Activated T-helper 2 cell treated with anti-CD3 and anti-CD28 coated beads, Interferon-gamma antibody, Interleukin-2, Interleukin-4, amounts not matched to agents 10 μg/mL and 5 μg/mL and 100 μg/mL, durations not matched to agents 14 hours and 24 hours and 36 hours (primary cell): ENCODE measurements at regions of chr12 and their contacts with region 1.

Region 1: GRCh38 chr12:99043319-99043914 is 398.3 kb downstream of the APAF1 start:
- DNase-seq: no peak
- H3K4me3 Mint-ChIP-seq: no peak overlapping the region
- H3K27ac Mint-ChIP-seq: no peak overlapping the region
- H3K4me1 Mint-ChIP-seq: no peaks in the 10 kb centered on the region
- H3K27me3 Mint-ChIP-seq: no peaks in the 10 kb centered on the region

Region 2: DNA sequence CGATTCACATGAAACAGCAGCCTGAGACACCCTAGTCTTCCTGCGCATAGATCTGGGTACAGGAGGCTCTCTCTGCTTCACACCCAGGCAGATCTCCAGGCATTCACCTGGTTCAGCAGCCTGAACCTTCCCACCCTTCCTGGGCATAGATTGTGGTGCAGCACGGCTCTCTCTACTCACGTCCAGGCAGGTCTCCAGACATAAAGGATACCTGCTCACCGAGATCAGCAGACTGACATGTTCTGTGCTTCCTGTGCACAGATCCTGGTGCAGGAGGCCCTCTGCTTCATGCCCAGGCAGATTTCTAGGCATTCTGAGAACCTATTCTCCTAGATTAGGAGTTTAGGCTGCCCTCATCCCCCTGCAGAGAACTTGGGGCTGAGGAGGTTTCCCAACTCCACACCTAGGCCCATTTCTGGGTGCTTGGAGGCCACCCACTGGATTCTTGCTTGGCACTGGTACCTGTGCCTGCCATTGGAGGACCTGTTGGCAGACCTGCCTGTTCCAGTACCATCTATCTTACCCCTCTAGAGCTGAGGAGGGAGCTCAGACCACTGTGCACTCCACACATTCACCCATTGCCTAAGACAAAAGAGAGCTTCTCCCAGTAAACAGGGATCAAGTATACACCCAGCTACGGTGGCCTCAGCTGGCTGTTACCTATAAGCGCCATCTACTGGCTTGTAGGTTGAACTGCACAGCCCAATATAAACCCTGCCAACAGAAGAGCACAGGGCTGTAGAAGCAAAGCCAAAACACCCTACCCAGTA is 576.2 kb after region 1 on chr12:
- intact Hi-C with region 1: loop called (anchors 1 kb)
- DNase-seq: no peak
- H3K4me3 Mint-ChIP-seq: no peak overlapping the region
- H3K27ac Mint-ChIP-seq: no peak overlapping the region
- H3K4me1 Mint-ChIP-seq: no peaks in the 10 kb centered on the region
- H3K27me3 Mint-ChIP-seq: no peaks in the 10 kb centered on the region

Region 3: DNA sequence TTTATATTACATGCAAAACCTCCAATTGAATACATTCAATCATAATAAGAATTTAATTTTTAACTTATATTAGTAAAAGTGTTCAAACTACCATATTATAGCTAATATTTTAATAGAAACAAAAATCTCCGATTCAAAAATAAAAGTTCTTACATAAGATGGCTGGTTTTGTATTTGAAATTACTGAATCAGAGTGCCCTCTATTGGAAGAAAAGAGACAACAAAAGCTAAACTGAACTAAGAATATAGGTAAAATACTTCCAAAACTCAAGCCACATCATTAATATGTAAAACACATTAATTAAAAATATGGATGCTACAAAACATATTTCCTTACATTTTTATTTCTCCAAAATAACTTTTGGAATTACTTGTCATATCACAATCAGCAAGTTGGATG is 724.4 kb after region 1 on chr12:
- intact Hi-C with region 1: loop called (anchors 2 kb)
- DNase-seq: no peak
- H3K4me3 Mint-ChIP-seq: no peak overlapping the region
- H3K27ac Mint-ChIP-seq: no peak overlapping the region
- H3K4me1 Mint-ChIP-seq: no peaks in the 10 kb centered on the region
- H3K27me3 Mint-ChIP-seq: no peaks in the 10 kb centered on the region

Region 4: DNA sequence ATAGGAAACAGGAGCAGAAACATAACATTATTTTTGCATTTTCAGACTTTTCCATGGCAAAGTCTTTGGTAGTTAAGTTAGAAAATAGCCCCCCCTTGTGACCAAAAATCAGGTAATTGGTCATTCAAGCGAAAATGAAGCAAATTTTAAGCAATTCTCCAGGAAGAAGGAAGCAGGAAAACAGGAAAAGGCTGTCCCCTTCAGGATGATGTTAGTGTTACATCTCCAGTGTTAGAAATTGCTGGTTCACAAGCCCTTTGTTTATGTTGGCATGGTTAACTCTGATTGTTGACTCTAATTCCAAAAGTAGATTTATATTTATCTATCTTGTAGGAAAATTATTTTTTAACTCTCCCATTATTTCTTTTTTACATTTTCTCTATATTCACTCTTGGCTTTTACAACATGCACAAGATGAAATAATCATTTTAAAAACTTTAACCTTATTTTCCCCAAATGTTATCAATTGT is 1511.2 kb after region 1 on chr12:
- intact Hi-C with region 1: loop called (anchors 10 kb)
- DNase-seq: no peak
- H3K4me3 Mint-ChIP-seq: no peak overlapping the region
- H3K27ac Mint-ChIP-seq: no peak overlapping the region
- H3K4me1 Mint-ChIP-seq: no peaks in the 10 kb centered on the region
- H3K27me3 Mint-ChIP-seq: no peaks in the 10 kb centered on the region